A673 (cell line): ENCODE measurements at regions of chr18 and their contacts with region 1.

Region 1: DNA sequence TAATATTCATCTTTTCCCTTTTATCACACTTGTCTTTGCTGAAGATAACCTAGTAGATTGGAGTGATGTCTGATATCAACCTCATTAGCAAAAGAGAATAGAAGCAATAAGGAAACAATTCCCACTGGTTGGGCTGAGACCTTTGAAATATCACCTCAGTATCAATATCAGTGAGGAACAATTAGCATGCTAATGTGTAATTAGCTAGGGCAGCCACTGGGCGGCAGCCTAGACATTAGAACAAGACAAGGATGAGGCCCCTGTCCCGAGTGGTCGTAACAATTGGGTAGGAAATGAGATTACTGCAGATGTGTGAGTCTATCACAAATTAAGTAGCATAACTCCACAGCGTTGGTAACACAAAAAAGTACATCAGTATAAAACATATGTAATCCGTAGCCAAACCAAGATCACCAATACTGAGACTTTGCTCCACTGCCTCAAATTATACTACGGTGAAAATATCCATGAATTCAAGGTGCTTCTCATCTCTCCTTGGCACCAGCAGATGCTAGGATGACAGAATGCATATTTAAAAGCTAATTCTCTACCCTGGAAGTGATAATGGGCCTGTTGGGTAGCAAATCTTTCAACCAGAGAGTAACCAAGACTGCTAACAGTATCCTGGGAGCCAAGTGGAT is 99.1 kb downstream of the ALPK2 start:
- DNase-seq: peak; percentile 77
- H3K4me3 ChIP-seq: no peak overlapping the region
- H3K27ac ChIP-seq: no peak overlapping the region
- H3K4me1 ChIP-seq: peaks cover 3% of the 10 kb centered on the region
- H3K27me3 ChIP-seq: no peaks in the 10 kb centered on the region
- CTCF ChIP-seq: peak; percentile 88

Region 2: GRCh38 chr18:59070181-59070912 is 540.5 kb after region 1 on chr18:
- CTCF ChIA-PET with region 1: interaction called, 5 read pairs
- POLR2A ChIA-PET with region 1: no interaction called
- intact Hi-C with region 1: loop called (anchors 5 kb)
- DNase-seq: peak; percentile 94
- H3K4me3 ChIP-seq: no peak overlapping the region
- H3K27ac ChIP-seq: no peak overlapping the region
- H3K4me1 ChIP-seq: peaks cover 4% of the 10 kb centered on the region
- H3K27me3 ChIP-seq: no peaks in the 10 kb centered on the region
- CTCF ChIP-seq: peak; percentile 96